Panc1 (cell line): ENCODE measurements at regions of chr1 and their contacts with region 1.

Region 1: DNA sequence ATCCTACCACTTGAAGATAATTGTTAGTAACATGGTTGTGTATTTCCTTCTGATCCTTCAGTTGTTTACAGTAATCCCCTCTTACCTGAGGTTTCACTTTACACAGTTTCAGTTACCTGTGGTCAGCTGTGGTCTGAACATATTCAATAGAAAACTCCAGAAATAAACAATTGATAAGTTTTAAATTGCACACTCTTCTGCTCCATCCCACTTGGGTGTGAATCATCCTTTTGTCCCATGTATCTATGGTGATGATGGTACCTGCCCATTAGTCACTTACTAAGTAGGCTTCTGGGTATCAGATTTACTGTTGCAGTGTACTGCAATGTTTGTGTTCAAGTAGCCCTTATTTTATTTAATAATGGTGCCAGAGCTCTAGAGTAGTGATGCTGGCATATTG is 62.5 kb downstream of the OSBPL9 start:
- DNase-seq: no peak
- ATAC-seq: no peak
- H3K4me3 ChIP-seq: no peak overlapping the region
- H3K27ac ChIP-seq: no peak overlapping the region
- H3K4me1 ChIP-seq: no peaks in the 10 kb centered on the region
- H3K27me3 ChIP-seq: no peaks in the 10 kb centered on the region
- CTCF ChIP-seq: no peak

Region 2: DNA sequence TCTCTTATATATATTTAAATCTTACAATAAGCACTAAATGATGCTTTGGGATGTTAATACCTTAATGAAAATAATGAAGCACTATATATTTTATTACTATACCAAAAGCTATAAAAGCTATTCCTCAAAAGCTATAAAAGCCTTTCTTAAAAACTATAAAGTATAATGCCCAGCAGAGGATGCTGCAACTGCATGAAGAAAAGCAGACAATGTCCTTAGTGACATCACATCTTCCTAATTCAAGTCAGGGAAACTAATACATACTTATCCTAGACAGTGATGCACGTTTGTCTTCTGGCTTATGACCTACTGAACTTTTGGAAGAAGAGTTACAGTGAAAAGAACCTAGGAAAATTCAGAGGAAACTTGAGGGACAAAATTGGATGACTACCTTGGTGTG is 590.9 kb before region 1 on chr1:
- CTCF ChIA-PET with region 1: no interaction called
- POLR2A ChIA-PET with region 1: no interaction called
- in situ Hi-C with region 1: no loop called
- intact Hi-C with region 1: no loop called
- DNase-seq: peak; percentile 5
- ATAC-seq: no peak
- H3K4me3 ChIP-seq: no peak overlapping the region
- H3K27ac ChIP-seq: no peak overlapping the region
- H3K4me1 ChIP-seq: no peaks in the 10 kb centered on the region
- H3K27me3 ChIP-seq: no peaks in the 10 kb centered on the region; the same call in 1 of the 2 replicates
- CTCF ChIP-seq: peak; percentile 39; the same call in 1 of the 2 replicates

Region 3: GRCh38 chr1:51699376-51699775 is 19.9 kb after region 1 on chr1:
- CTCF ChIA-PET with region 1: no interaction called
- POLR2A ChIA-PET with region 1: interaction called, 14 read pairs
- in situ Hi-C with region 1: no loop called
- intact Hi-C with region 1: no loop called
- DNase-seq: no peak
- ATAC-seq: no peak
- H3K4me3 ChIP-seq: no peak overlapping the region
- H3K27ac ChIP-seq: no peak overlapping the region
- H3K4me1 ChIP-seq: peaks cover 3% of the 10 kb centered on the region; the same call in 1 of the 2 replicates
- H3K27me3 ChIP-seq: no peaks in the 10 kb centered on the region
- CTCF ChIP-seq: no peak

Region 4: GRCh38 chr1:51728611-51729155 is 49.2 kb after region 1 on chr1:
- CTCF ChIA-PET with region 1: no interaction called
- POLR2A ChIA-PET with region 1: no interaction called
- in situ Hi-C with region 1: no loop called
- intact Hi-C with region 1: no loop called
- DNase-seq: no peak
- ATAC-seq: no peak
- H3K4me3 ChIP-seq: peak overlapping the region; percentile 83 to 84
- H3K27ac ChIP-seq: peak overlapping the region; percentile 92
- H3K4me1 ChIP-seq: peaks cover 32% of the 10 kb centered on the region
- H3K27me3 ChIP-seq: no peaks in the 10 kb centered on the region
- CTCF ChIP-seq: no peak